Astrocyte of the cerebellum (primary cell): ENCODE measurements at regions of chr4 and their contacts with region 1.

Region 1: GRCh38 chr4:175850248-175850647 is 38.2 kb upstream of the GPM6A start:
- DNase-seq: no peak
- H3K4me3 ChIP-seq: no peak overlapping the region
- CTCF ChIP-seq: no peak

Region 2: GRCh38 chr4:175802988-175803387 is 47.3 kb before region 1 on chr4:
- in situ Hi-C with region 1: loop called (anchors 5 kb)
- DNase-seq: no peak
- H3K4me3 ChIP-seq: no peak overlapping the region
- CTCF ChIP-seq: no peak

Region 3: GRCh38 chr4:175910700-175911099 is 60.5 kb after region 1 on chr4:
- in situ Hi-C with region 1: loop called (anchors 5 kb)
- DNase-seq: no peak
- H3K4me3 ChIP-seq: no peak overlapping the region
- CTCF ChIP-seq: no peak